Aorta (tissue), 5 donors: ENCODE measurements at regions of chr4 and their contacts with region 1.

Region 1: GRCh38 chr4:53551958-53552357 is 39.3 kb downstream of the LNX1 start:
- DNase-seq: no peak
- ATAC-seq: no peak
- H3K4me3 ChIP-seq: no peak overlapping the region
- H3K27ac ChIP-seq: no peak overlapping the region
- H3K4me1 ChIP-seq: peaks cover 3 to 4% of the 10 kb centered on the region in 2 donors
- H3K27me3 ChIP-seq: no peaks in the 10 kb centered on the region

Region 2: DNA sequence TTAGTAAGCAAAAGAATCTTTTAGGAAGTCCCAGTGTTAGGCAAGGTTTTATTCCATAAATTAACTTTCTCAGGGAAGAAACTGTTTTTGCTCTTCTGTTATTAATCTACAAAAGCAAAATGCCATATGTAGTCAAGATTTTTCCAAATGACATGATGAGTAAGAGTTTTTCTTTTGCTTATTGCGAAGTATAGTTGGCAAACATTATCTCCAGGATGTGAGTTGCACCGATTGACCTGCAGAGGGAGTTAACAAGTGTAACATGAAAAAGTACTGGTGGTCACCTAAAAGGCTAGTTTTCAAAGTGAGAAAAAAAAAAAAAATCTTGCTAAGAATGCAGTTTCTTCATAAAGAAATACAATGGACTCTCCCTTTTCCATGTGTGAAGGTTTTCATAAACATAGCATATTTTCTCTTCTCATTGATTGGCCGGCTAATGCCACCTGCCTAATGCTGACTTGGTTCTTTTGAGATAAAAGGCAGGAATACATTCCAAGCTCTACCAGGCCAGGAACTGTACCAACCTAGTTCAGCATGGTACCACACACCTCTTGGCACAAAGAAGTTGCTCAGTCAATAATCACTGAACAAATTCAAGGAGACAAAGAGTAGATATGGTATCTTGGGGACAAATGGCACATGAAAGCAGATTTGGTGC is 60.9 kb before region 1 on chr4:
- intact Hi-C with region 1: loop called in 1 of 2 experiments (anchors 5 kb)
- DNase-seq: no peak
- ATAC-seq: peak; percentile 77
- H3K4me3 ChIP-seq: no peak overlapping the region
- H3K27ac ChIP-seq: no peak overlapping the region
- H3K4me1 ChIP-seq: peaks cover 0 to 3% of the 10 kb centered on the region in 2 donors
- H3K27me3 ChIP-seq: no peaks in the 10 kb centered on the region

Region 3: DNA sequence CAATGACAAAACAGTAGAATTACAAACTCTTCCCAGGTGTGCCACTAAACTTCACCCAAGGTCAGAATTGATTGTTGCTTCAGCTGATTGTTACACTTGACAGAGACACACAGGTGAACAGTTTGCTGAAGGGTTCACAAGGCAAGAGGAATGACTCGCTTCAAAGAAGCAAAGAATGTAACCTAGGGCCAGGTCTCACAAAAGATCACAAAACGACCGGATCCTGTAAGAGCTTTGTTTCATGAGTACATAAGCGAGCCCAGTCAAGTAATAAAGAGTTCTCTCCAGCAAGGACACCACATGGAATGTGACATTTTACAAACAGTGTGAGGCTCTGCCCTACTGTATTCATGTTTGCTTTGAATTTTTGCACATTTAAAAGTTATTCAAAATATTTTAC is 30.2 kb after region 1 on chr4:
- intact Hi-C with region 1: no loop called
- DNase-seq: no peak
- ATAC-seq: no peak
- H3K4me3 ChIP-seq: no peak overlapping the region
- H3K27ac ChIP-seq: no peak overlapping the region
- H3K4me1 ChIP-seq: no peaks in the 10 kb centered on the region
- H3K27me3 ChIP-seq: no peaks in the 10 kb centered on the region

Region 4: DNA sequence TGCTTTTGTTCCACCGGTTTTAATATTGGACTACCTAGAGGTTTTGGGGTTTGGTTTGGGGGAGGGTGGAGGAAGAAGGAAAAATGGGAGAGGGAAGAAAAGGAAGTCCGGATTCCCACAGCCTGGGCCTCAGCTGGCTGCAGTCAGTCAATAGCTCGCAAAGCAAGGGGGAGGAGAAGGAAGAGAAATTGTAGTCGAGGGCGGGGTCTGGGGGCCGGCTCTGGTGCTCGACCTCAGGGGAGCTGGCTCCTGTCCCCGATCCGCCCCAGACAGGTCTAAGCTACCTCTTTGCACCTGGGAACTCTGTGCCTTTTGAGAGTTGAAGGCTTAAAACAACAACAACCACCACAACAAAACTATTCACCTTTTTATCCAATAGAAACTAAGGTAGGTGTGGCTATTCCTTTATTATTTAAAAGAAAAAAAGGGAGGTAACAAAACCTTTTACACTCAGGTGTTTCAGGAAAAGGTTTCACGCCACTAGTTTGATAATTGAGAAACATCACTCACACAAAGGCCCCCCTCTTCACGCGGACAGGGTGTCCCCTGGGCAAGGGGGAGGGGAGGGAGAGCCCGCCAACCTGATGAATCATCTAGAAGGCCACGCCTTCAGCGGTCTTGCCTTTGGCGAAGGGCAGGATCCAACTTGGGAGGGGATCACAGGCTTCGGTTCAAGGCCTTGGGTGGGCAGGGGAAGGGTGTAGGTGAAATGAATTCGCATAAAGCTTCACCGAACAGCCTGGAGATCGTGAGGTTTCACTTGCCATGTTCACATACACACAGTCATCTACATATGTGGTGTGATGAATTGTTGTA is 40.9 kb after region 1 on chr4:
- intact Hi-C with region 1: loop called in 1 of 2 experiments (anchors 5 kb)
- DNase-seq: peak; percentile 65 to 78
- ATAC-seq: peak; percentile 65
- H3K4me3 ChIP-seq: peak overlapping the region in 1 of 2 donors; percentile 22
- H3K27ac ChIP-seq: no peak overlapping the region
- H3K4me1 ChIP-seq: no peaks in the 10 kb centered on the region
- H3K27me3 ChIP-seq: no peaks in the 10 kb centered on the region

Region 5: GRCh38 chr4:53777244-53777984 is 225.5 kb after region 1 on chr4:
- intact Hi-C with region 1: no loop called
- DNase-seq: no peak
- ATAC-seq: no peak
- H3K4me3 ChIP-seq: no peak overlapping the region
- H3K27ac ChIP-seq: no peak overlapping the region
- H3K4me1 ChIP-seq: no peaks in the 10 kb centered on the region
- H3K27me3 ChIP-seq: no peaks in the 10 kb centered on the region